Breast epithelium (tissue), 4 donors: ENCODE measurements at regions of chr7 and their contacts with region 1.

Region 1: GRCh38 chr7:127733986-127734385 is 82.0 kb downstream of the SND1 start:
- DNase-seq: no peak
- H3K4me3 ChIP-seq: no peak overlapping the region
- H3K27ac ChIP-seq: no peak overlapping the region
- H3K4me1 ChIP-seq: no peaks in the 10 kb centered on the region
- H3K27me3 ChIP-seq: no peaks in the 10 kb centered on the region
- CTCF ChIP-seq: no peak
- POLR2A ChIP-seq: no peak

Region 2: DNA sequence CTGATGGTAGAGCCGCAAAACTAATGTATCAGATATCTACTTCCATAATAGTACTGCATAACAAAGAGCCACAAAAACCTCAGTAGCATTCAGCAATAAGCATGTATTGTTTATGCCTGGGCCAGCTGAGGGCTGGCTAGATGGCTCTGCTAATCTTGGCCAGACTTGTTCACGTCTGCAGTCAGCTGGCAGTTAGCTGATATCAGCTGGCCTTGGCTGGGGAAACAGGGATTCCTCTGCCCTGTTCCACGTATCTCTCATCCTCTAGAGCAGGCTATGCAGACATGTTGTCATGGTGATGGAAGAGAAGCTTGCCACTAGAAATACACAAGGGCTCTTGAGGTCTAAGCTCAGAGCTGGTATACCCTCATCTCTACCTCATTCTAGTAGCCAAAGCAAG is 544.1 kb before region 1 on chr7:
- intact Hi-C with region 1: no loop called
- DNase-seq: no peak
- H3K4me3 ChIP-seq: no peak overlapping the region
- H3K27ac ChIP-seq: no peak overlapping the region
- H3K4me1 ChIP-seq: no peaks in the 10 kb centered on the region
- H3K27me3 ChIP-seq: no peaks in the 10 kb centered on the region
- CTCF ChIP-seq: no peak
- POLR2A ChIP-seq: no peak

Region 3: GRCh38 chr7:127751490-127752448 is 17.8 kb after region 1 on chr7:
- intact Hi-C with region 1: loop called (anchors 1 kb)
- DNase-seq: no peak
- H3K4me3 ChIP-seq: no peak overlapping the region
- H3K27ac ChIP-seq: no peak overlapping the region
- H3K4me1 ChIP-seq: no peaks in the 10 kb centered on the region
- H3K27me3 ChIP-seq: no peaks in the 10 kb centered on the region
- CTCF ChIP-seq: no peak
- POLR2A ChIP-seq: no peak